Testis (tissue), 5 donors: ENCODE measurements at regions of chr17 and their contacts with region 1.

Region 1: GRCh38 chr17:28750178-28751047 is 6.6 kb downstream of the TRAF4 start:
- DNase-seq: peak; percentile 97
- H3K4me3 ChIP-seq: no peak overlapping the region
- H3K27ac ChIP-seq: peak overlapping the region in 1 of 2 donors; percentile 15
- H3K4me1 ChIP-seq: peaks cover 29% of the 10 kb centered on the region
- H3K27me3 ChIP-seq: no peaks in the 10 kb centered on the region
- CTCF ChIP-seq: peak; percentile 97 to 99 (median 97)
- POLR2A ChIP-seq: no peak

Region 2: GRCh38 chr17:28916302-28916934 is 166.0 kb after region 1 on chr17:
- intact Hi-C with region 1: loop called (anchors 10 kb)
- DNase-seq: peak; percentile 66
- H3K4me3 ChIP-seq: no peak overlapping the region
- H3K27ac ChIP-seq: no peak overlapping the region
- H3K4me1 ChIP-seq: peaks cover 27% of the 10 kb centered on the region
- H3K27me3 ChIP-seq: no peaks in the 10 kb centered on the region
- CTCF ChIP-seq: peak; percentile 52 to 75 (median 58)
- POLR2A ChIP-seq: no peak